AG04450 (cell line): ENCODE measurements at regions of chr20 and their contacts with region 1.

Region 1: DNA sequence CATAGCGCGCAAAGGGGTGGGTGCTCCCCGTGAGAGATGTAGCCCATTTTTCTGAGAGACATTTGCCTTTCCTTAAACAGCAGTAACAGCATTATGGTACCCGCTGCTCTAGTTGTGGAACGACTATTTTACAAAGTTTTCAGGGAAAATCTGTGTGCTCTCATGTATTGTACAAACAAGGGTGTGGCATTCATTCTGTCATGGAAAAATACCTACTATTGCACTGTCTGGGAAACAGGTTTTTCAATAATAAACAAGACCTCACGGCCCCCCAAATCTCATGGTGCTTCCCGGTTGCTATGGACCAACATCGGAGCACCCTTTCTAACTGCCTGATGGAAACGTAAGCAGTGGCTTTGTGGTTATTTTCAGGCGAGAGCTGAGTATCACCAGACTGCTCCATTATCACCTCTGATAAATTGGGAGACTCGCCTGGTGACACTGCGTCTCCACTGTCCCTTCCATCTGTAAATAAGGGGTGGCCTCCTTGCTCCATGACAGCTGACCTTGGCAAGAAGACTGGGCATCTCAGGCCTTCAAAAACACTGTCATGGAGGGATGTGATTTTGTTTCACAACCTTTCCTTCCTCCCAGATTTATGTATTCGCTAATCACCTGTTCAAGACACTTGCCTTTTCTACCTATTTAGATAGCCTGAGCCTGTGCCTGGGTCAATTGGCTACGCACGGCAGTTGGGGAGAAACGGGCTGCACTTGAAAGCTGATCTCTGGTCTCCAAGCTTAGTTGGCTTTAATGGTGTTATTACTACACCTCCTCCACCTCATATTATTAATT is 17.9 kb upstream of the CDH4 start:
- DNase-seq: no peak
- H3K4me3 ChIP-seq: no peak overlapping the region
- H3K27ac ChIP-seq: no peak overlapping the region
- H3K27me3 ChIP-seq: peaks cover 8% of the 10 kb centered on the region
- CTCF ChIP-seq: no peak

Region 2: DNA sequence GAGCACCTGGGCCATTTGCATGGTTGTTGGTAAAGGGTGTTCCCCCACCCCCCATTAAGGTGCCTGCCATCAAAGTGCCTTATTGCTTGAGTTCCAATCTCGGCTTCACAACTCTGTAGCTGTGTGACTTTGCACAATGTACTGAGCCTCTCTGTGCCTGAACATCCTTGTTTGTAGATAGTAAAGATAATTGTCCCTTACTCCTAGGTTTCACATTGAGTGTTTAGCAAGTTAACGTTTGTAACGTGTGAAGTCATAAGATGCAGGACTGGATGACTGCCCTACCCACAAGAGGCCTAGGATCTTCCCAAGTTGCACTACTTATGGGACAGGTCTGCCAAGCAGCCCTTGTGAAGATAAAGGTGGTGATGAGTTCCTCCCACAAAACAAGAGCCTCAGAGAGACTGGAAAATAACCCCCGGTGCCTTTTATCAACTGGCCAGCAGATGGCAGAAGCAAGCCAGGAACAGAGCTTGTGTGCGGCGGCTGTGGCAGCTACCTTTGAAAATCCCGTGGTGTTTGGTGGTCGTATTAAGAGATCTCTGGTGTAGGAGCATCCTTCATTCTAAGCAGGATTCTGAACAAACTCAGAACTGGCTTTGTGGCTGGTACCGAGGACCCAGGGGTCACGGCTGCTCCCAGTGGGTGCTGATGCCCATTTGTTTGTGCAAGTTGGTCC is 1176.9 kb before region 1 on chr20:
- CTCF ChIA-PET with region 1: interaction called, 11 read pairs
- POLR2A ChIA-PET with region 1: no interaction called
- DNase-seq: no peak
- H3K4me3 ChIP-seq: no peak overlapping the region
- H3K27ac ChIP-seq: no peak overlapping the region
- H3K27me3 ChIP-seq: peaks cover 12% of the 10 kb centered on the region
- CTCF ChIP-seq: peak; percentile 94

Region 3: DNA sequence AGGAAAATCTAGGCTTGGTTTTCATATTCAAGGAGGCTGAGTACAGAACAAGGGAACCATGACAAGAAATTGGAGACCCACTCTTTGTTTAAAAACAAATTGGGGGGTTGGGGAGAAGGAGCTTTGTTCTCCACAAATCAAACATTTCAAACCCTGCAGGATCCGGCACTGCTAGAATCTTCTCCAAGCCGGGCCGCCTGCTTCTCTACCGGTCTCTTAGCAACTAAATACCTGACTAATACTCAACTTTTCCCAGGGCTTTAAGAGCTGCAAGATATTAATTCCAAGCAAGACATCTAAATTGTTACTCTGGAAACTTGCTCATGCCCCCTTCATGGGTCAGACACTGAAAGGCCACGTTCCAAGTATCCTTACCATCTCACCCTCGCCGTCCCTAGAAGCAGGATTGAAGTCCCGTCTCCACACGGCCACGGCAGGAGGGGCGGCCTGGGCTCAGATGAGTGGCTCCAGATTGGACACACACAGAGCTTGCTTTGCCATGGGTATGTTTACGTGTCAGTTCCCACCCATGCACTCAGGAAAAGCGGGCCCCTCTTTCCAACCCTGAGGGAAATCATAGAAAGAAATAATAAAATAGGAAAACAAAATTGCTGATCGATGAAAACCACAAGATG is 108.5 kb before region 1 on chr20:
- CTCF ChIA-PET with region 1: interaction called, 10 read pairs
- POLR2A ChIA-PET with region 1: no interaction called
- DNase-seq: no peak
- H3K4me3 ChIP-seq: no peak overlapping the region
- H3K27ac ChIP-seq: no peak overlapping the region
- H3K27me3 ChIP-seq: no peaks in the 10 kb centered on the region
- CTCF ChIP-seq: no peak

Region 4: DNA sequence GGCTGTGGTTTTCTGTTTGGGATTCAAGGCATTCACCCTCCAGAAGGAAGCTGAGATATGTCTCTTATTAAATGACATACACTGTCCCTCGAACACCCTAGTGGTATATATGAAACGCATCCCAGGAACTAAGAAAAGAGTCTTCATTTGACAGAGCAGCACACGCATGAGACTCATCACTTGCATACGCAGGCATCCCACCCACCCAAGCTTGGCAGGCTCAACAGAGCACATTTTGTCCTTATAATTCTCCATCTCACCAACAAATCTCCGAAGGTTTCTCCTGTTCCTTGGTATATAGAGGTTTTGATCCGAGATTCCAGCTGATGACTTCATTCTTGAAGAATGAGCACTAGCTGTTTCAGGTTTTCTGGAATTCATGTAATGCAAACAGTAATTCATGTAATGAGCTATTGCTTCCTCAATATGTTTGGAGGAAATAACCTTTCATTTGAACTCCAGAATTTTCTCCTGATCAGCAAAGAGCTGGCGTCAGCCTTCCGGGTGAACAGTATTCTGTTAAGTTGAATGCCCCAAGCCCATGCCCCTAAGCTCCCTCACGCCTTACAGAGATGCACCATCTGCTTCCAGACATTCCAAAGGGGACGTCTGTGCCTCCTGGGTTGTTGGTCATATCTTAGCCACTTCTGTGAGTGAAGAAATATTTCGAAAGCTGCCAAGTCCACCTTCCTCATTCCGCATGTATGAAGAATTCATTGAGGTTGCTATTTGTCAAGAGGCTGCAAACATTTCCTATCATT is 48.2 kb before region 1 on chr20:
- CTCF ChIA-PET with region 1: interaction called, 27 read pairs
- POLR2A ChIA-PET with region 1: no interaction called
- DNase-seq: peak; percentile 90
- H3K4me3 ChIP-seq: no peak overlapping the region
- H3K27ac ChIP-seq: peak overlapping the region; percentile 87
- H3K27me3 ChIP-seq: no peaks in the 10 kb centered on the region
- CTCF ChIP-seq: 0 out of 2 replicates have a peak, but pooled peaks have one; percentile 9

Region 5: GRCh38 chr20:61210862-61211261 is 23.3 kb before region 1 on chr20:
- CTCF ChIA-PET with region 1: interaction called, 37 read pairs
- POLR2A ChIA-PET with region 1: no interaction called
- DNase-seq: no peak
- H3K4me3 ChIP-seq: no peak overlapping the region
- H3K27ac ChIP-seq: no peak overlapping the region
- H3K27me3 ChIP-seq: peaks cover 30% of the 10 kb centered on the region
- CTCF ChIP-seq: no peak

Region 6: DNA sequence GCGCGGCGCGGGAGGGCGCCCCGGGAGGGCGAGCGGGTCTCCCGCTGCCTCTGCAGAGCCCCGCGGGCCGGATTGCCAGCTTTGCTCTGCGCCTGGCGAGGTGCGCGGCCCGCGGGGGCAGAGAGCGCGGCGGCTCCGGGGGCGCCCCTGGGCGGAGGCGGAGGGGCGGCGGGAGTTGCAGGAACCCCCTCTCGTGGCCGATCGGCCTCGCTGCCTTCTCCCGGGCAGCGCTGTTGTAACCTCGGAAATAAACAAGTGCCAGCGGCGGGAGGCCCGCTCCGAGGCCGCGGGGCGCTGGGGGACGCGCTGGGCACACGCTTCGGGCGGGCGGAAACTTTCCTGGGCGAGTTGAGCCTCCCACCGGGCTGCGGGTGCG is 19.0 kb after region 1 on chr20:
- CTCF ChIA-PET with region 1: interaction called, 63 read pairs
- POLR2A ChIA-PET with region 1: interaction called, 3 read pairs
- DNase-seq: no peak
- H3K4me3 ChIP-seq: peak overlapping the region; percentile 65
- H3K27ac ChIP-seq: no peak overlapping the region
- H3K27me3 ChIP-seq: peaks cover 21% of the 10 kb centered on the region
- CTCF ChIP-seq: peak; percentile 44